ENCODE measurements at regions of chr3 and their contacts with region 1.

Region 1: GRCh38 chr3:46866720-46867549 is 3.7 kb upstream of the MYL3 start:
- DNase-seq: peak; percentile 69
- H3K4me3 ChIP-seq: no peak overlapping the region
- H3K27ac ChIP-seq: no peak overlapping the region
- H3K4me1 ChIP-seq: no peaks in the 10 kb centered on the region
- CTCF ChIP-seq: peak; percentile 95

Region 2: DNA sequence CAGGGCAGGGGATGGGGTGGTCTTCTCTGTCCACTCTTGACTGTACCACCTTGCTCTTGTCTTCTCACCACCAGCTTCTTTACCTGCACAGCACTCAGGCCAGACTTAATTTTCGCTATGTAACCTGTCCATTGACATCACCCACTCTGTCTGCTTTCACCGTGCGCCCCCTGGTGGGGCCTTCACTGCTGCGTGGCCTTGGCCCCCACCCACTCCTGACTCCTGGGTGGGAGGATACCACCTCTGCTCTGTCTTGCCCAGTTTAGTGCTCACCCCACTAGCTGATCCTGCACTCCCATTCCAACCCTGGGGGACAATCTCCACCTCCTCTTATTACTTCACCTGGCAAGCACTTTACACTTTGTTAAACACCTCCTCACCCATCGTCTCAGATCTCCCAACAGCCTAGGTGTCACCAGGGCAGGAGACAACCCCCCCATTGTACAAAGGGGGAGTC is 28.3 kb after region 1 on chr3:
- CTCF ChIA-PET with region 1: no interaction called
- POLR2A ChIA-PET with region 1: no interaction called
- intact Hi-C with region 1: loop called (anchors 1 kb)
- DNase-seq: peak; percentile 74
- H3K4me3 ChIP-seq: no peak overlapping the region
- H3K27ac ChIP-seq: no peak overlapping the region
- H3K4me1 ChIP-seq: no peaks in the 10 kb centered on the region
- CTCF ChIP-seq: peak; percentile 98

Region 3: DNA sequence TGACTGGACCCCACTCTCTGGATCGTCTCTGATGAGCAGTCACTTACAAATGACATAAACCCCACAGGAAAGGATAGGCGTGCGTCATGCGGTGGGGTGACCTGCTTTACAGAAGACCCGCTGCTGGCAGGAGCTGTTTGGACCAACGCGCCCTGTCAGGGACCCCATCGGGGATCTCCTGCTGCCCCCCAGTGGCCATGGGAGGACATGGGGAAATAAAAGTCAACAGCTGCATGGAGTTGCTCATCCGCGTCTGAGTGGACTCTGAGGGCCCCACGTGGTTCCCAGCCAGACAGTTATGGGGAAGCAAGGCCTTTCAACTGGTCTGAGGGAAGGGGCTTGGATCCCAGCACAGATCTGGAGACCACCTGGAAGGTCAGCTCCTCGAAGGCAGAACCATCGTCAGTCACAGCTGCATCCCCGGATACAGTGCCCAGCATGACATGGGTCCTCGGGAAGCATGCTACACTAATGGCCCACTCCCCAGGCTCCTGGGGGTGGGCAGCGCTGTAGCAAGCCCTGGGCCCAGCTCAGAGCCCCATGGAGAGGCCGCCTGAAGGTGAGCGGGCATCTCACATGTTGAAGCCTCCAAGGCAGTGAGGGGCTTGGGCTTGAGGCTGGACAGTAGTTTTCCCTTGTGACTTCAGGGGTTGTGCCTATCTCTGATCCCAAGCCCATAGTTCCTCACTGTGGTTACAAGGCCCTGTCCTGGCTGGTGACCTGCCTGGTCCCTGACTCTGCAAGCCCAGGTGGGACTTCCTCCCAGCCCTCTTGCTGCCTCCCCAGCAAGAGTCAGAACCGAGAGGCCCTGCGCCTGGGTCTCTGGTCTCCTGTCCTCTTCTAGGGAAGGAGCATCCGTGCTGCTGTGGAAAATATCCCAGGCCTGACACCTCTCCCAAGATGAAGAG is 42.9 kb after region 1 on chr3:
- CTCF ChIA-PET with region 1: no interaction called
- POLR2A ChIA-PET with region 1: no interaction called
- intact Hi-C with region 1: loop called (anchors 1 kb)
- DNase-seq: peak; percentile 85
- H3K4me3 ChIP-seq: no peak overlapping the region
- H3K27ac ChIP-seq: no peak overlapping the region
- H3K4me1 ChIP-seq: peaks cover 11% of the 10 kb centered on the region
- CTCF ChIP-seq: peak; percentile 87

Region 4: GRCh38 chr3:47370887-47371697 is 504.2 kb after region 1 on chr3:
- CTCF ChIA-PET with region 1: no interaction called
- POLR2A ChIA-PET with region 1: no interaction called
- intact Hi-C with region 1: loop called (anchors 2 kb)
- DNase-seq: peak; percentile 54
- H3K4me3 ChIP-seq: no peak overlapping the region
- H3K27ac ChIP-seq: no peak overlapping the region
- H3K4me1 ChIP-seq: no peaks in the 10 kb centered on the region
- CTCF ChIP-seq: peak; percentile 57